ENCODE measurements at regions of chr3 and their contacts with region 1.

Region 1: DNA sequence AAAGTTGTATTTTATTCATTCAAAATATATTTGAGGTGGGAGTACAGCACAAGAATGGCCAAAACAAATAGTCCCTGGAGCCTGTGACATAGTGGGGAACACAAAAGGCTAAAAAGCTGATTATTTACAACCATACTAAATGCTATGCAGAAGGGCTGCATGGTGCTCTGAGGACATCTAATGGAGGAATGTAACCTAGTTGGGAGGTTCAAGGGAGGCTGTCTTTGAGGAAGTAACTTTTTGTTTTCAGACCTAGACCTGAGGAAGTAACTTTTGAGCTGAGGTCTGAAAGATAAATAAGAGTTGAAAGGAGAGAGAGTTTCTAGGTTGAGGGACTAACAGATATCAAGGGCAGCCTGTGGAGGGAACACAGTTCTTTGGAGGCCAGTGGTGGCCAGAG is 34.8 kb upstream of the RASA2 start:
- DNase-seq: peak; percentile 41 to 65
- H3K4me3 ChIP-seq: no peak overlapping the region
- H3K27ac ChIP-seq: no peak overlapping the region
- H3K4me1 ChIP-seq: peaks cover 14% of the 10 kb centered on the region
- H3K27me3 ChIP-seq: no peaks in the 10 kb centered on the region
- CTCF ChIP-seq: peak; percentile 69

Region 2: DNA sequence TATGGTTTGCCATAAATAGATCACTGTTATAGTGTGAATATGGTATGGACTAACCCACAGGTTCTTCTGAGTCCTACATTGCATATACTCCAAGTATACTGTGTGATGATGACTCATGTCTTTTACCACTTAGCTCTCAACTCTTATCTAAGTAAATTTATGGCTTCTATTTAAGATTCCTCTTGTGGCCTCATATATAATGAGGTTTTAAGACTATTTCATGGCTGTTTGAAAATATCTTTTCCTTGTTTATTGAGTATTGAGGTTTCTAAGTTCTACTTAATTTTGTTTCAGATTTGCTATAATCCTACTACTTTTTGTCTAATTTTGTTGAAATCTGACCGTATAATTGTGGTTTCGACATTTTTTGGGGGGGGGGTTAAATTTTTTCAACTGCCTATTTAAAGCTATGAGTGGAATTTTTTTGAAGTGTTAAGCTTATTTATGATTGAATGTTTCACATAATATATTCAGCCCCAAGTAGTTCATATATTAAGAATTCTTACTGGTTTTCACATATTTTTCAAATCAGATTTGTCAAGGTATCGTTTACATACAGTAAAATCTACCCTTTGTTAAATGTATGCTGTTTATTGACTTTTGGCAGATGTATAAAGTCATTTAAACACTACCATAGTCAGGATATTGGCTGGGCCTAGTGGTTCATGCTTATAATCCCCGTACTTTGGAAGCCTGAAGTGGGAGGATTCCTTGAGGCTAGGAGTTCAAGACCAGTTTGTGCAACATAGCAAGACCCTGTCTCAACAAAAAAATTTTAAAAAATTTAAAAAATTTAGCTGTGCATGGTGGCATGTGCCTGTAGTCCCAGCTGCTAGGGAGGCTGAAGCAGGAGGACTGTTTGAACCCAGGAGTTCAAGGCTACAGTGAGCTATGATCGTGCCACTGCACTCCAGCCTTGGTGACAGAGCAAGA is 498.7 kb before region 1 on chr3:
- CTCF ChIA-PET with region 1: no interaction called
- POLR2A ChIA-PET with region 1: no interaction called
- intact Hi-C with region 1: no loop called
- DNase-seq: peak in 1 of 2 experiments; percentile 59
- H3K4me3 ChIP-seq: no peak overlapping the region
- H3K27ac ChIP-seq: peak overlapping the region; percentile 22
- H3K4me1 ChIP-seq: peaks cover 29% of the 10 kb centered on the region
- H3K27me3 ChIP-seq: no peaks in the 10 kb centered on the region
- CTCF ChIP-seq: no peak

Region 3: DNA sequence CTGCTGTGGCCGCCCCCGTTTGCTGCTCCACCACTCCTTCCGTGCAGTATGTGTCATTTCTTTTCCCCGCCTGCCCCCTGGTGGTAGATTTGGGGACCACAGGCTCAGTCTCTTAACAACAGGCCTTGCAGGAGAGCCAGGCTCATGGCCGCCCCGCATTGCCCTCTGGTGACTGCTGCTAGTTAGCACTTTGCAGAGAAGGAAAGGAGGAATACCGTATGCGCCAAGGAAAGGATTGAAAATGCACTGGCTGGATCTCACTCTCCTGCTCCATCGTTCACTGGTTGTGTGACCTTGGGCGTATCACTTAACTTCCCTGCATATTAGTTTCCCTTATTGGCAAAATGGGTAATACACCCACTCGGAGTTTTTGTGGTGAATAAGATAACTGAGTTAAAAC is 259.7 kb before region 1 on chr3:
- CTCF ChIA-PET with region 1: interaction called, 3 read pairs
- POLR2A ChIA-PET with region 1: no interaction called
- intact Hi-C with region 1: loop called (anchors 5 kb)
- DNase-seq: peak; percentile 74 to 97
- H3K4me3 ChIP-seq: no peak overlapping the region
- H3K27ac ChIP-seq: no peak overlapping the region
- H3K4me1 ChIP-seq: no peaks in the 10 kb centered on the region
- H3K27me3 ChIP-seq: peaks cover 59% of the 10 kb centered on the region
- CTCF ChIP-seq: peak; percentile 97

Region 4: DNA sequence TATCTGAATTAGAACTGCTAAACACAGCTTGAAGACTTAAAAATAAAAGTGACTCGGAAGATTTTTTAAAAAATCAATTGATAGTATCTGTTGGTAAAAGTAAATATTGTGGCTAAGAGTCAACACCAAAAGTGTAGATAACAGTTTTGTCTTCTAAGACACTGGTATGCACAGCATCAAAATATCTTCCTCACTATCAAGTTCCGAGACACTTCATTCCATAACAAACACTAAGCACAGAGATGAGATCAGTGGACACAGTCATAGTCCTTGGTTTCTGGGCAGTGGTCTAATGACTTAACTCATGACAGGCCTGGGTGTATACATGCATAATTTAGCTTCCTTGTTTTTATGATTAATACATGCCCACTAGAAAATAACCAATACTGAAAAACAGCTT is 157.2 kb before region 1 on chr3:
- CTCF ChIA-PET with region 1: no interaction called
- POLR2A ChIA-PET with region 1: interaction called, 11 read pairs
- intact Hi-C with region 1: no loop called
- DNase-seq: peak in 1 of 2 experiments; percentile 79
- H3K4me3 ChIP-seq: no peak overlapping the region; the same call in 1 of the 2 replicates
- H3K27ac ChIP-seq: peak overlapping the region; percentile 48
- H3K4me1 ChIP-seq: peaks cover 11% of the 10 kb centered on the region; the same call in 1 of the 2 replicates
- H3K27me3 ChIP-seq: no peaks in the 10 kb centered on the region
- CTCF ChIP-seq: no peak

Region 5: GRCh38 chr3:141311496-141312353 is 140.3 kb before region 1 on chr3:
- CTCF ChIA-PET with region 1: interaction called, 43 read pairs
- POLR2A ChIA-PET with region 1: no interaction called
- intact Hi-C with region 1: loop called (anchors 1 kb)
- DNase-seq: peak; percentile 89 to 99
- H3K4me3 ChIP-seq: peak overlapping the region; percentile 79
- H3K27ac ChIP-seq: no peak overlapping the region
- H3K4me1 ChIP-seq: peaks cover 7% of the 10 kb centered on the region
- H3K27me3 ChIP-seq: no peaks in the 10 kb centered on the region
- CTCF ChIP-seq: peak; percentile 73

Region 6: GRCh38 chr3:141346418-141346817 is 105.6 kb before region 1 on chr3:
- CTCF ChIA-PET with region 1: no interaction called
- POLR2A ChIA-PET with region 1: no interaction called
- intact Hi-C with region 1: no loop called
- DNase-seq: no peak
- H3K4me3 ChIP-seq: no peak overlapping the region
- H3K27ac ChIP-seq: no peak overlapping the region
- H3K4me1 ChIP-seq: no peaks in the 10 kb centered on the region
- H3K27me3 ChIP-seq: no peaks in the 10 kb centered on the region
- CTCF ChIP-seq: no peak

Region 7: DNA sequence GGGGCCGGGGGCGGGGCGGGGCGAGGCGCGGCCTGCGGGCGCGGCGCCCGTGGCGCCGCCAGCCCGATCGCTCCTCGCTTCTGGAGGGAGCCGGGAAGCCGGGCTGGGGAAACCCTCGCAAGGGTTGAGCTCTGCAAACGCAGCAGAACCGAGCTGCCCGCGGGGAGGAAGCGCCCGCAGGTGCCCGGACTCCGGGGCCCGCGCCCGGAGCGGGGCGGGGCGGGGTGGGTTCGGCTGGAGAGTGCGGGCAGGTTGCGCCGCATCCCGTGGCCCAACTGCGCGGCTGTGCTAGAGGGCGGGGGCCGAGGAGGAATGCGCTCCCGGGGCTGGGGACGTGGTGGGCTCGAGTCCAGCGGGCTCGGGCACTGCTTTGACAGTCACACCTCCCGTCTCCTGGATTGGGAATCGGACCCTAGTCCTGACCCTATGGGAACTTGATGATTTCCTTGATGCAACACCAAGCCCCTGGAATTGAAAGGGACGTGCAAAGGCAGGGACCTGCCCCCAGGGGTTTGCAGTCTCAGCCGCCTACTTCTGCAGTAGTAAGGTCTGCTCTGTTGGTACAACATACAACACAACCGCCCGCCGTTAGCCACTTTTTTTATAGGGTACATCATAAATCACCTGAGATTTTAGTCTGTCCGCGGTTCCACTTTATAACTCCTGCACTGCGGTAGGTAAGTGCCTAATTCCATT is 49.4 kb before region 1 on chr3:
- CTCF ChIA-PET with region 1: no interaction called
- POLR2A ChIA-PET with region 1: no interaction called
- intact Hi-C with region 1: loop called (anchors 5 kb)
- DNase-seq: peak in 1 of 2 experiments; percentile 35
- H3K4me3 ChIP-seq: peak overlapping the region; percentile 61; the same call in 1 of the 2 replicates
- H3K27ac ChIP-seq: no peak overlapping the region
- H3K4me1 ChIP-seq: no peaks in the 10 kb centered on the region; the same call in none of the 2 replicates
- H3K27me3 ChIP-seq: 0 out of 2 replicates have a peak, but pooled peaks cover 5% of the 10 kb centered on the region
- CTCF ChIP-seq: no peak

Region 8: GRCh38 chr3:141498598-141499223 is 46.7 kb after region 1 on chr3:
- CTCF ChIA-PET with region 1: no interaction called
- POLR2A ChIA-PET with region 1: no interaction called
- intact Hi-C with region 1: no loop called
- DNase-seq: no peak
- H3K4me3 ChIP-seq: no peak overlapping the region
- H3K27ac ChIP-seq: no peak overlapping the region
- H3K4me1 ChIP-seq: no peaks in the 10 kb centered on the region
- H3K27me3 ChIP-seq: no peaks in the 10 kb centered on the region
- CTCF ChIP-seq: no peak

Region 9: GRCh38 chr3:142051316-142051715 is 599.3 kb after region 1 on chr3:
- CTCF ChIA-PET with region 1: interaction called, 11 read pairs
- POLR2A ChIA-PET with region 1: no interaction called
- intact Hi-C with region 1: no loop called
- DNase-seq: no peak
- H3K4me3 ChIP-seq: no peak overlapping the region
- H3K27ac ChIP-seq: no peak overlapping the region
- H3K4me1 ChIP-seq: no peaks in the 10 kb centered on the region
- H3K27me3 ChIP-seq: no peaks in the 10 kb centered on the region
- CTCF ChIP-seq: no peak

Measured in PC-9 (cell line).